BJ (cell line): ENCODE measurements at regions of chr10 and their contacts with region 1.

Region 1: GRCh38 chr10:90947030-90947940 is 26.4 kb upstream of the ANKRD1 start:
- DNase-seq: no peak
- H3K4me3 ChIP-seq: no peak overlapping the region
- H3K27me3 ChIP-seq: no peaks in the 10 kb centered on the region
- CTCF ChIP-seq: no peak

Region 2: DNA sequence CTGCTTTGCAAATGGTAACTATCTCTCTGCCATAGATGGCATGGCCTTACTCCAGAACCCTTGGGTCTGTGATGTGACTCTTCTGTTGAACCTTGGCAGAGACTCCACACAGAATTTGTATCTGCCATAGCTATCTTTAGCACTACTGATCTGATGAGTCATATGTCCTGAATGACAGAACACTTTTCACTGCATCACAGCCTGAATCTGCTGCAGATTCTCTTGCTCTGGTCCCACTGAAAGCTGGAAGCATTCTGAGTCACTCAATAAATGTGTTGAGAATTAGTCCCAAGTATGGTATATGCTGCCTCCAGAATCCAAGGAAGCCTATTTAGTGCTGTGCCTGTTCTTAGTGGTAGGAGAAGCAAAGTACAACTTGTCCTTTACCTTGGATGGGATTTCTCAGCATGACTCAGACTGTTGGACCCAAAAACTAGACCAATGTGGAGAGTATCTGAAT is 13.1 kb after region 1 on chr10:
- CTCF ChIA-PET with region 1: interaction called, 11 read pairs
- POLR2A ChIA-PET with region 1: no interaction called
- DNase-seq: peak; percentile 77
- H3K4me3 ChIP-seq: no peak overlapping the region
- H3K27me3 ChIP-seq: no peaks in the 10 kb centered on the region
- CTCF ChIP-seq: peak; percentile 16; the same call in 1 of the 2 replicates

Region 3: GRCh38 chr10:90983914-90984549 is 36.7 kb after region 1 on chr10:
- CTCF ChIA-PET with region 1: no interaction called
- POLR2A ChIA-PET with region 1: no interaction called
- DNase-seq: no peak
- H3K4me3 ChIP-seq: no peak overlapping the region
- H3K27me3 ChIP-seq: no peaks in the 10 kb centered on the region
- CTCF ChIP-seq: no peak